ENCODE measurements at regions of chr1 and their contacts with region 1.

Region 1: DNA sequence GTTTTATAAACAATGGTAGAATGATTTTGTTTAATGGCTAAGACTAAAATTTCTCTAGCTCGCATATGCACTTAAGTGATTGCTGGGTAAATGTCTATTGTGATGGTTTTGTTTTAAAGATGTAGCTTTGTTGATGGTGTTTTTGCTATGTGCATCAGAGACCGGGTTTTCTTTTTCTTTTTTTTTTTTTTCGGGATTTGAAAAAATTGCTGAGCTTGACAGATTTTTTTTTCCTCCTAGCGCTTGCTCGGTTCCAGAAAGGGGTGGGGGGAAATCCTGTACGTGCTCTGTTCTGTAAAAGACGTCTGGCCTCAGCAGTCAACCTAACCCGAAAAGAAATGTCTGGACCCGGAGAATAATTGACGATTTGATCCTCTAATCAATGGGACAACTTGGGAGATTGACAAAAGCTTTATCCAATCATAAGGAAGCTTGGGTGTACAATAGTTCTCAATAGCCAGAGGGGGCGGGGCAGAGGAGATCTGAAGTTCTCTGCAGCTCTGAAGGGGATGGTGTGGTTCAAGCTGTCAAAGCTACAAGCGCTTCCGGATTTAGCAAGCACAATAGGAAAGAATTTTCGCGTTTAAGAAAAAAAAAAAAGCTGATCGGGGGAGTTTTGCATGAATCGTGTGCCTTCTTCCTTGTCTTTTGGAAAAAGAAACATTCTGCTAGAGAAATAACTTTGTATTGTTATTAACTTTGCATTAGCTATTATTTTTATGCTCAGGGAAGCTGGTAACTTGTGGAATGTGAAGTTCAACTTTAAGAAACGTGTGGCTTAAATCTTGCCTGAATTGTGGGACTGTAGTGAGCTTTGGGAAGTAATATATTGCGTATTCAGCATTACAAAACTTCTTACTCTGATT is 4.5 kb upstream of the NFIA start:
- DNase-seq: peak; percentile 95
- H3K4me3 ChIP-seq: peak overlapping the region; percentile 45 to 60 (median 54)
- H3K27ac ChIP-seq: peak overlapping the region; percentile 95 to 97 (median 96)
- H3K4me1 ChIP-seq: peaks cover 0 to 46% (median 42%) of the 10 kb centered on the region in 4 donors
- H3K27me3 ChIP-seq: no peaks in the 10 kb centered on the region
- CTCF ChIP-seq: no peak
- EP300 ChIP-seq: no peak
- POLR2A ChIP-seq: no peak

Region 2: GRCh38 chr1:61120998-61121397 is 43.1 kb after region 1 on chr1:
- intact Hi-C with region 1: loop called (anchors 5 kb)
- DNase-seq: no peak
- H3K4me3 ChIP-seq: peak overlapping the region in 3 of 4 donors; percentile 3 to 29 (median 13)
- H3K27ac ChIP-seq: peak overlapping the region; percentile 50 to 65 (median 56)
- H3K4me1 ChIP-seq: peaks cover 0 to 87% (median 72%) of the 10 kb centered on the region in 4 donors
- H3K27me3 ChIP-seq: no peaks in the 10 kb centered on the region
- CTCF ChIP-seq: no peak
- EP300 ChIP-seq: peak in 2 of 4 donors; percentile 30 to 81
- POLR2A ChIP-seq: no peak

Region 3: DNA sequence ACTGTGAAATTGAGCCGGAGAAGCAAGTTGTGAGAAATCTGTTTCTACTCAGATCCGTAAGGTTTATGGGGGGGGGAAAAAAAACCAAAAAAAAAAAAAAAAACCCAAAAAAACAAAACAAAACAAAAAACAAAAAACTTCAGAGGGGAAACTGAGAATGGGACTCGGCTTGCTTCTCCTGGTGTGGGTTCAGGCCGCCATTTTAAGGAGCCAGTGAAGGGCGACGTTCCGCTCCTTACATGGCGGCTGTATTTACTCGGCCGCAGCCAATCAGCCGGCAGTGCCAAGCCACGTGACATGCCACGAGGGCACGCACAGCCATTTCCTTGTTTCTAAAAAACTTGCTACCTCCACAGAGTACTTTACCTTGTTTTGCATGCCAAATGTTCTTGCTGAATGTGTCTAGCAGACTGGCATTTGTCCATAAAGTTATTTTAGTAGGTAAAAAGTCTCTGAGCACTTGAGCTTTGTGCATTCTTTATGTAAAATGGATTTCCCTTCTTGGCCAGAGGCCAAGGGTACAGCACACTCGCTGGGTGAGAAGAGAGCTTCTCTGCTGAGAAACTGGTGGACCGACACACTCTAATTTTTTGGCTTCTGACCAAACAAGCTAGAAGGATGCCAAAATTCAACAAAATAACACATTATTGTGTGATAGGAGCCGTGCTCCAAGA is 106.3 kb after region 1 on chr1:
- intact Hi-C with region 1: loop called (anchors 5 kb)
- DNase-seq: peak; percentile 98
- H3K4me3 ChIP-seq: peak overlapping the region; percentile 29 to 41 (median 38)
- H3K27ac ChIP-seq: peak overlapping the region; percentile 78 to 88 (median 84)
- H3K4me1 ChIP-seq: peaks cover 0 to 81% (median 62%) of the 10 kb centered on the region in 4 donors
- H3K27me3 ChIP-seq: no peaks in the 10 kb centered on the region
- CTCF ChIP-seq: no peak
- EP300 ChIP-seq: no peak
- POLR2A ChIP-seq: no peak

Region 4: DNA sequence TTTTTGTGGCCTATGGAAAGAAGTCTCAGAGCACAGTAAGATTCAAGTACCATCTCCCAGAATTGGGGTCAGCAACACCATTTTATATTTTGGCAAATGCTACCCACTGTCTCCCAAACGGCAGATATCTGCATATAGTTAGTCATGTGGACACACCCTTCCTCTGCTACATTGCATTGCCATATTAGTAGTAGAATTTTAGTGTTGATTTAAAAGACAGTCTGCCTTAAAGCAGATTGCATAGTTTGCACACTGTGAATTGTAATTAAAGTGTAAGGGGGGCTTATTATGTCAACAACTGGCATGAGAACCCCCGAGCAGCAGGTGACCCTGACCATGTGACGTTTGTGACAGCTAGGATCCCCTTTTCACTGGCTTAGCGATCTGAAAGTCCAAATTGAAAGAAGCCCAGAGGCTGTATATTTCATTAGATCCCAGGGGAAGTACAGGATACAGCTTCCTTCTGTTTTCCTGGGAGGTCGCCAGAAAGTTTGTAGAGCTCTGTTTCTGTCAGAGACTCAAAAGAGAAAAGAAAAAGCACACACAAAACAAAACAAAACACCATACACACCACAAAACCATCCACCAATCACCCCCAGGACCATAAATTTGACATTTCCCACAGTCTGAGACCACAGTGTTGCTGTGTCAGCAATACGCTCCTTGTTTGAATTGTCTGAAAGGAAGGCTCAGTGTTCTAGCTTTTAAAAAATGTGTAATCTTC is 176.9 kb after region 1 on chr1:
- intact Hi-C with region 1: loop called (anchors 2 kb)
- DNase-seq: peak; percentile 84
- H3K4me3 ChIP-seq: peak overlapping the region; percentile 7 to 41 (median 29)
- H3K27ac ChIP-seq: peak overlapping the region; percentile 74 to 84 (median 77)
- H3K4me1 ChIP-seq: peaks cover 0 to 79% (median 51%) of the 10 kb centered on the region in 4 donors
- H3K27me3 ChIP-seq: no peaks in the 10 kb centered on the region
- CTCF ChIP-seq: no peak
- EP300 ChIP-seq: no peak
- POLR2A ChIP-seq: no peak

Region 5: DNA sequence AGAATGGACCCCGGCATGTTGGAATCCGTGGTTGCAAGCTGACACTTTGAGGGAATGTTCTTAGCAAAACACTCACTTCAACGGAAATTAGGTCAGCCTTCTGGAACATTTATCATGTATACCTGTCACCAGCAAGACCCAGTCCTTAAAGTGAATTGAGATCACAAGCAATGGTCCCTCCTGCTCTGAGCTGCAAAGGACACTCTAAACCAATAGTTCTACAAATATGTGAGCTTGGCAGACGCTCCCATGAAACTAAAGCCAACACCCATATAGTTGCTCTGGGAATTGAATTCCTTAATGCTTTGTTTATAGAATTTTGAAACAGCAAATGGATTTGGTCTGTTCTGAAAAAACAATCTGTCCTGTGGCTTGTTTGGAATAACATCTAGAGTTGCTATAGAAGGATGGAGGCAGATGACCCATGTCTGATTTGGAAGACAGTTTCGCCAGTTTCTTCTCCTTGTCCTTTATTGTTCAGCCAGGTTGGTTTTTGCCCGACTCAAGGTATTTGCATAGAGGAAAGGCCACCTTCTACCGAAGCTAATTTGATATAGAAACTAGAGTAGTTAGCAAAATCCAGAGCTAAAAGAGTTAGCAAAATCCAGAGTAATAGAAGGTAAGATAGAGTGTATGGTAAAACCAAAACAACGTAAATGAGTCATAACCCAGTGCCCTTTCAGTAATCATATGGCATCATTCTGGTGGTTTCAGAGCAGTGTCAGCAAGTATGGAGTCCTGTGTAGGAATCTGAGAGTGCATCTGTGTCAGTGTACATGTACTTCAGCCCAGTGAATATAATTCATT is 240.6 kb after region 1 on chr1:
- intact Hi-C with region 1: no loop called
- DNase-seq: peak; percentile 88
- H3K4me3 ChIP-seq: peak overlapping the region in 1 of 4 donors; percentile 13
- H3K27ac ChIP-seq: peak overlapping the region; percentile 31 to 85 (median 74)
- H3K4me1 ChIP-seq: peaks cover 0 to 29% (median 20%) of the 10 kb centered on the region in 4 donors
- H3K27me3 ChIP-seq: no peaks in the 10 kb centered on the region
- CTCF ChIP-seq: no peak
- EP300 ChIP-seq: no peak
- POLR2A ChIP-seq: no peak

Region 6: GRCh38 chr1:61724813-61725694 is 647.1 kb after region 1 on chr1 and contains the start of gene TM2D1:
- intact Hi-C with region 1: loop called (anchors 10 kb)
- DNase-seq: peak; percentile 95
- H3K4me3 ChIP-seq: peak within 1 kb of the TSS; percentile 66 to 88 (median 76)
- H3K27ac ChIP-seq: peak within 1 kb of the TSS; percentile 85 to 88 (median 86)
- H3K4me1 ChIP-seq: peaks cover 0 to 26% (median 14%) of the 10 kb centered on the region in 4 donors
- H3K27me3 ChIP-seq: no peaks in the 10 kb centered on the region
- CTCF ChIP-seq: no peak
- EP300 ChIP-seq: peak in 1 of 4 donors; percentile 6
- POLR2A ChIP-seq: peak; percentile 72 to 88
- total RNA-seq, gene TM2D1: 63.7 to 88.5 (median 69.6) TPM